Ovary (tissue), 10 donors: ENCODE measurements at regions of chr6 and their contacts with region 1.

Region 1: DNA sequence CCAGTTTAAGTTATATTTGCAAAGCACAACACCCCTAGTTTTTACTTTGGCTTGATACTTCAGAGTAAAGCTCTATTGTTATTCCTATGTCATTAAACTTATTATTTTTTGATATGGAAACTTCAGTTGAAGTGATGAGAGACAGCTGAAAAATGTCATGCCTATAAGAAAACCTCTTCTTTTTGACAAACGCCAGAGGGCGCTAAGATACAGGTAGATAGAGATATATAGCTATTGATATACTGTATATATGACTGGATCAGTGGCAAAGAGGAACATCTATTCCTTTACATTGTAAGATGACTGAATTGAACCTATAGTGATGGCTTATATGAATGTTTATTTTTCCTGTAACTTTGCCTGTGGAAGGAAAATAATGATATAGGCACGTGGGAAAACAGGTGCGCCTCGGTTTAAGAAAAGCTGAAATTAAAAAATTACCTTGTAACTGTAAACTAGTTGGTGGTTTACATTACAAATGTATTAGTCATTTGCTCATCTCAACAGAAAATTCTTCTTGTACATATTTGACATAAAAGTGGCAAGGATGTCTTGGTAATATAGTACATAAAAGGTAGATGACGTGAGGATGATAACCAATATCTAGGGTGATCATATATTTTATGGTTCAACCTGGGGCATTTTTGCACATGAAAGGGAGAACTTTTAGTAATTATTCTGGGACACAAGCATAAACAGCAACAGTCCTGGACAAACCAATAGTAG is 74.1 kb downstream of the LAMA4 start:
- DNase-seq: peak in 3 of 5 donors; percentile 32 to 64 (median 42)
- H3K4me3 ChIP-seq: no peak overlapping the region
- H3K27ac ChIP-seq: no peak overlapping the region
- H3K4me1 ChIP-seq: no peaks in the 10 kb centered on the region
- H3K27me3 ChIP-seq: no peaks in the 10 kb centered on the region
- CTCF ChIP-seq: peak; percentile 61 to 87 (median 79)
- EP300 ChIP-seq: no peak
- POLR2A ChIP-seq: no peak

Region 2: GRCh38 chr6:112311950-112312547 is 131.8 kb after region 1 on chr6:
- intact Hi-C with region 1: loop called (anchors 2 to 10 kb)
- DNase-seq: peak in 1 of 5 donors; percentile 31
- H3K4me3 ChIP-seq: no peak overlapping the region
- H3K27ac ChIP-seq: no peak overlapping the region
- H3K4me1 ChIP-seq: peaks cover 2% of the 10 kb centered on the region
- H3K27me3 ChIP-seq: no peaks in the 10 kb centered on the region
- CTCF ChIP-seq: peak; percentile 51 to 73 (median 67)
- EP300 ChIP-seq: no peak
- POLR2A ChIP-seq: no peak

Region 3: DNA sequence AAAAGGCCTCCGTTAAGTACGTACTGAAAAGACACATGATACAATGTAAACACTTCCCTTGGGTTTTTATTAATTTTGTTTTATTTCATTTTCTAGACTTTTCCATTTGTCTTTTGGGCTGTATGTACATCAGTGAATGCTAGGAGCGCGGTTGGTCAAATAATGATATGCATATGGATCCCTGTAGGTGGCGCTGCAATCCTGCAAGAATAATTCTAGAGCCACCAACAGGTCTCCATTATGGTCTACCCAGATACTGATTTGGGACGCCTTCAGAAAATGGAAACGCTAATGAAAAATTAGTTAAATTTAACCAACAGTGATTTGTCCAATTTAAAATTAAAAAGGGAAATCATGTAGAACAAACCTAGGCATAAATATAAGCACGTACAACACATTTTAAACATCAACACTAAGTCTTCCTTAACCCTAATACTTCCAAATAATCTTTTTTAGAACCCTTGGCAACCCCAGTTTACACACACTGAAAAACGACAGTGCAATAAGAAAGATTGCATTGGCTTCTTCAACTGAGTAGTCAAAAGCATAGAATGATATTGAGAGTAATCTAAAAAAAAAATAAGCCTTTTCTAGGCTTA is 600.3 kb after region 1 on chr6:
- intact Hi-C with region 1: no loop called
- DNase-seq: peak; percentile 51 to 80 (median 68)
- H3K4me3 ChIP-seq: no peak overlapping the region
- H3K27ac ChIP-seq: no peak overlapping the region
- H3K4me1 ChIP-seq: no peaks in the 10 kb centered on the region
- H3K27me3 ChIP-seq: no peaks in the 10 kb centered on the region
- CTCF ChIP-seq: peak; percentile 40 to 80 (median 79)
- EP300 ChIP-seq: no peak
- POLR2A ChIP-seq: no peak